Right ventricle myocardium inferior (tissue), 1 donor: ENCODE measurements at regions of chr5 and their contacts with region 1.

Region 1: DNA sequence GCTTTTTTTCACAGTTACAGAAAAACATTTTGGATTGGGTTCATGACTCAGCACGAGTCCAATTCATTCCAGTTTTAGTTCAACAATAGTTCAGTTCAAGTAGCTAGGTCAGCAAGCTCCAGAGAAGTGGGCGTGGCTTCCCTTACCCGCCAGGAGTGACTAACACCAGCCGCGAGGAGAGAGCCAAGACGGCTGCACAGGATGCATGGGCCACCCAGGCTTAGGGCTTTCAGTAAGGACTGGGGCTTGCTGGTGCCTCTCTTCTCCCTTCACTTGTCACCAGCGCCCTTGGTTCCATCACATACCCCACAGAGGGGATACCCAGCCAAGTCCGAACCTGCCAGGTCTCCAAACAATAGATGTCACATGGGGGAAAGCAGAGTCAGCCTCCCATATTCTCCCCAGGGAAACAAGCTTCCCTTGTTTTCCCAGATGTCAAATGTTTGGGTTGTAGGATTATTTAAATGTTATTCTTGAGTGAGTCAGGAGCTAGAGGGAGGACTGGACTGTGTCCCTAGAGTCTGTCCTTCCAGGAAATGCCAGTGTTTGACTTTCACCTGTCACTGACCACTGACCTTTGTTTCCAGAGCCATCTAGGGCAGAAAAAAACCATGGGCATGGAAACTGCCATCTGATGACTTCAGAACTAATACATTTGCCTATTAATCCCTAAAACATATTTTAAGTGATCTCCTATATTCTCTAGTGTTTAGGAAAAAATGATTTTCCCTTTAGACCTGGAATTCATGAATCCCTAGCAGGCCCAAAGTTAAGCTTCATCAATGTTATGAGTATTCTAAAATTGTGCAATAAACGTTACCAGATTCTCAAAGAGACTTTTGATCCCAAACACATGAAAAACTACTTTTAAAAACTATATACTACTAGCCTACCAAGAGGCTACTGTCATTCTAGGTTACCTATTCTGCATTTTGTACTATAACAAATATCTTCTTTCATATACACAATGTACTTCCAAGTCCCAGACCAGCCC is 51.9 kb downstream of the NIPAL4 start:
- DNase-seq: peak; percentile 95
- ATAC-seq: peak; percentile 96

Region 2: GRCh38 chr5:157562111-157562581 is 50.2 kb after region 1 on chr5:
- intact Hi-C with region 1: loop called (anchors 1 kb)
- DNase-seq: peak; percentile 79
- ATAC-seq: peak; percentile 84

Region 3: DNA sequence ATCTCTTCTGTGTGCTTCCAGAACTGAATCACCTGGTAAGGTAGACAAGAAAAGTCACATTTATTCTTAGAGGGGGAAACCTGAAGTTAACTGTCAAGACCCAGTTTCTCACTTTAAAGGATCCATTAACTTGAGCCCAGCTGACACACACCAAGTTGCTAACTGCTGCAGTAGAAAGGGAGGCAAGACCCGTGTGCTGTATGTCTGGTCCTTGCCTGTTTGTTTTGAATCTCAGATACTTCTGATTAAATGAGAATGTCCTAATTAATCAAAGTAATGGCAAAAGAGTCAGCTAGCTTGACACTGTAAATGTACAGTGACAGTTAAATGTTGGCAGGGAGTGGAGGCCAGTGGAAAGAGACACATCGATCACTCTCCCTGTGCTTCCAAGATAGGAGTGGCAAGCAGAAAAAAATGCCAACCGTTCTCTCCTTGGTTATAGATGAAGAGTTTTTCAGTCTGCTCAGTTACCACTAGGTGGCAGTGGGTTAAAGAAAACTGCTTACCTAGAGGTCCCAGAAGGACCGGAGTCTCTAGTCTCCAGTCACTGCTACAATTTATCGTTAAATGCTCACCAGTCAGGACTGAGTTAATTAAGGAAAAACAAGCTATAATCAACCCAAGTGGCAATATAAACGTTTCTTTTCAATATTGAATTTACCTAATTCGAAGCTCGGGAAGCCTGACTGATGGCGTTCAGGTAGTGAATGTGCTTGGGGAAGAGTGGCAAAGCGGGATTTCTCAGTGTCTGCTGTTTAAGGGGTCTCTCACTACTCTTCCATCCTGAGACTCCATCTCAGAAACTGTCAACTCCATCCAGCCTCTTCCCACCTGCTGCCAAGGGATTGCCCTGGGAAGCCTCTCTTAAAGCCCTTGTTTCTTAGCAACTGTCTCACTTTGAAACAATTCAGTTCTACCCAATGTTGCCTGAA is 250.0 kb after region 1 on chr5:
- intact Hi-C with region 1: no loop called
- DNase-seq: no peak
- ATAC-seq: peak; percentile 75